Body of pancreas (tissue), 4 donors: ENCODE measurements at regions of chr10 and their contacts with region 1.

Region 1: GRCh38 chr10:44974628-44975431 is 3.8 kb downstream of the DEPP1 start:
- DNase-seq: peak; percentile 77 to 86 (median 84)
- ATAC-seq: peak; percentile 54
- H3K4me3 ChIP-seq: no peak overlapping the region
- H3K27ac ChIP-seq: peak overlapping the region; percentile 88 to 95 (median 94)
- H3K4me1 ChIP-seq: peaks cover 64% of the 10 kb centered on the region
- H3K27me3 ChIP-seq: no peaks in the 10 kb centered on the region
- CTCF ChIP-seq: peak; percentile 86 to 98 (median 97)
- POLR2A ChIP-seq: peak; percentile 16 to 59 (median 42)

Region 2: GRCh38 chr10:44801383-44802327 is 173.2 kb before region 1 on chr10:
- intact Hi-C with region 1: no loop called
- DNase-seq: peak; percentile 96 to 99 (median 98)
- ATAC-seq: peak; percentile 94
- H3K4me3 ChIP-seq: no peak overlapping the region
- H3K27ac ChIP-seq: peak overlapping the region; percentile 45 to 68 (median 59)
- H3K4me1 ChIP-seq: peaks cover 52% of the 10 kb centered on the region
- H3K27me3 ChIP-seq: no peaks in the 10 kb centered on the region
- CTCF ChIP-seq: no peak
- POLR2A ChIP-seq: no peak

Region 3: GRCh38 chr10:44932517-44933450 is 42.0 kb before region 1 on chr10:
- intact Hi-C with region 1: loop called (anchors 5 kb)
- DNase-seq: peak; percentile 93 to 97 (median 94)
- ATAC-seq: peak; percentile 91
- H3K4me3 ChIP-seq: no peak overlapping the region
- H3K27ac ChIP-seq: peak overlapping the region in 3 of 4 donors; percentile 41 to 81 (median 81)
- H3K4me1 ChIP-seq: peaks cover 46% of the 10 kb centered on the region
- H3K27me3 ChIP-seq: no peaks in the 10 kb centered on the region
- CTCF ChIP-seq: peak; percentile 94 to 98 (median 97)
- POLR2A ChIP-seq: no peak